ENCODE measurements at regions of chr6 and their contacts with region 1.

Region 1: DNA sequence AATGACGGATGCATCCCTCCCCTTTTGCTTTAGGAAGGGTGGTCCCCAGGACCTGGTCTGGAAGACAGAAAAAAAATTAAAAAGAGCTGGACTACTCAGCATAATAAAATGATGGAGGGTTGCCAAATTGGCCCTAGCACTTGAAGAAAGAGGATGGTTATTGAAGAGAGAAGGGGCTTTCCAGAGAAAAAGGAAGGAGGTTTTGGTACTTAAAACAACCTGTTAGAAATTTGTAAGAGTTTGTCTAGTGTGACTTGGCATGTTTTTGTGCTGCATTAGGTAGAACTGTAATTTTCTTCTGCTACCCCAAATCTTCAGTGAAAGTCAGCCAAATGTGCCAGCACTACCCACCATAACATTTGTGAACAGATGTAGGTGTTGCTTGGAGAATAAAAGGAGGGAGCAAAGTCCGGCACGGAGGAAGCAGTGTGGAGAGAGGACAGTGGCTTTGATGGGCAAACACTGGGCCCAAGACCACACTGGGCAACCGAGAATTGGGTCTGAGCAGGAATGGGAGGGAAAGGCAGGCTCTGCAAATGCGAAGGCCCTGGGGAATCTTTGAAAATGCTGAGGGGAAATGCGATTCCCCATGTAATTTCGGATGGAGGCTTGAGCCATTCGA is 160.9 kb downstream of the QRSL1 start:
- DNase-seq: no peak
- H3K4me3 ChIP-seq: no peak overlapping the region
- CTCF ChIP-seq: no peak
- POLR2A ChIP-seq: no peak

Region 2: DNA sequence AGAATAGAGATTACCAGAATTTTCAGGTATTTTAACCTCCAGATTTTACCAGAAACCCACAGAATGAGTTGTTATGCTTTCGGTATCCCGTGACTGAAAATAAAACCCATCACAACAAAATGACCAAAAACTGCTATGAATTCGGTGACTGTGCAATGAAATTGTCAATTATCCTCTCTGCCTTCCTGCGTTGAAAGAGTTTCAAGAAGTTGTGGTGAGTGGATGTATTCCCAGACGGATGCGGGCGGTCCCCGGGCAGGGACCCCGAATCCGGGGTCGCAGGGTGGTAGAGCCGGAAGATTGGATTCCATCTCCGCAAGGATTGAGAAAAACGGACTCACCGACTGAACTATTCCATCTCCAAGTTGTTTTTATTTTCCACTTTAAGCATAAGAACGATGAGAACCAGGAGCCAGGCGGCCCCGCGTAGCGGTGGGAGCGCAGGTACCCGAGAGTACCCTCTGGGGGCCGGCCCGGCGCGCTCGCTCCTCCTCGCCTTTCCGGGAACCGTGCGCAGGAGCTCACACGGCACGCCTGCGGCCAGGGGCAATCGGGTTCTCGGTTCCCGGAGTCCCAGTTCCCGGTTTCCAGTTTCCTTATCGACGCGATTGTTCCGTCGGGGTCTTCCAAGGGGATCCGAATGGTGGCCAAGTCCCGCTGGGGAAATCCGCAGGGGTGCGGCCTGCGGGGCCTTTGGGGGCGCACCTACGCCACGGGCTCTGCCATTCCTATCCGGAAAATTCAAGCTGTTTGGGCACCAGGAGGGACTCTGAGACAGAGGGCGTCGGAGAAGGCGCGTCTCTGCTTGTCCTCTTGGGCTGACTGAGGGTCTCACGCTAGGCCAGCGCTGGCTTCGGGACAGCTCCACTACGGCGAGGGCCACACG is 809.0 kb before region 1 on chr6:
- intact Hi-C with region 1: loop called (anchors 5 kb)
- DNase-seq: no peak
- H3K4me3 ChIP-seq: no peak overlapping the region
- CTCF ChIP-seq: no peak
- POLR2A ChIP-seq: no peak

Region 3: GRCh38 chr6:106764353-106764980 is 25.8 kb before region 1 on chr6:
- intact Hi-C with region 1: no loop called
- DNase-seq: no peak
- H3K4me3 ChIP-seq: no peak overlapping the region
- CTCF ChIP-seq: no peak
- POLR2A ChIP-seq: no peak